H1 (cell line): ENCODE measurements at regions of chr5 and their contacts with region 1.

Region 1: DNA sequence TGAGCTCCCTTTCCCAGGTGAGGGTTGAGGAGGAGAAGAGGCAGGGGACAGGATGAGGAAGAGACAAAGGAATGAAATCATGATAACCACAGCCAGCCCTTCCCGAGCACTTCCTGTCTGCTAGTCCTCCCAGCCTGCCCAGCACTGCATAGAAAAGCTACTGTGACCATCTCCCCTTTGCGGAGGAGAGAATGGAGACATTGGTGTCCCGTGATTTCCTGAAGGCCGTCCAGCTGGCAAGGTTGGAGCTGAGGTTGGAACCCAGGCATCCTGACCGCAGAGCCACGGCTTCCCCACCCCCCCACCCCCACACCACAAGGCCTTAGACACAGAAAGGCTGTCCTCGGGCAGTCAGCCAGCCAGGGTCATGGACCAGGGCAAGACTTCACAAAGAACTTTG is 131.1 kb upstream of the ICE1 start:
- DNase-seq: no peak
- H3K4me3 ChIP-seq: no peak overlapping the region
- H3K27ac ChIP-seq: no peak overlapping the region
- H3K4me1 ChIP-seq: peaks cover 0 to 2% (median 0%) of the 10 kb centered on the region in 4 experiments; a peak in 1 of 7 replicates
- H3K27me3 ChIP-seq: no peaks in the 10 kb centered on the region
- CTCF ChIP-seq: no peak
- EP300 ChIP-seq: no peak
- POLR2A ChIP-seq: no peak
- RAD21 ChIP-seq: no peak

Region 2: GRCh38 chr5:5209089-5209488 is 82.3 kb before region 1 on chr5:
- CTCF ChIA-PET with region 1: no interaction called
- POLR2A ChIA-PET with region 1: no interaction called
- DNase-seq: no peak
- H3K4me3 ChIP-seq: no peak overlapping the region
- H3K27ac ChIP-seq: no peak overlapping the region
- H3K4me1 ChIP-seq: no peaks in the 10 kb centered on the region
- H3K27me3 ChIP-seq: no peaks in the 10 kb centered on the region
- CTCF ChIP-seq: no peak
- EP300 ChIP-seq: no peak
- POLR2A ChIP-seq: no peak
- RAD21 ChIP-seq: no peak

Region 3: GRCh38 chr5:5266296-5266695 is 25.1 kb before region 1 on chr5:
- CTCF ChIA-PET with region 1: interaction called, 10 read pairs
- POLR2A ChIA-PET with region 1: no interaction called
- DNase-seq: no peak
- H3K4me3 ChIP-seq: no peak overlapping the region
- H3K27ac ChIP-seq: no peak overlapping the region
- H3K4me1 ChIP-seq: peaks cover 0 to 5% (median 2%) of the 10 kb centered on the region in 4 experiments; a peak in 4 of 7 replicates
- H3K27me3 ChIP-seq: no peaks in the 10 kb centered on the region; a peak in 1 of 7 replicates
- CTCF ChIP-seq: no peak
- EP300 ChIP-seq: no peak
- POLR2A ChIP-seq: no peak
- RAD21 ChIP-seq: no peak

Region 4: GRCh38 chr5:5306696-5307095 is 15.3 kb after region 1 on chr5:
- CTCF ChIA-PET with region 1: interaction called, 17 read pairs
- POLR2A ChIA-PET with region 1: interaction called, 3 read pairs
- DNase-seq: no peak
- H3K4me3 ChIP-seq: no peak overlapping the region
- H3K27ac ChIP-seq: no peak overlapping the region
- H3K4me1 ChIP-seq: peaks cover 0 to 2% (median 0%) of the 10 kb centered on the region in 4 experiments; a peak in 3 of 7 replicates
- H3K27me3 ChIP-seq: no peaks in the 10 kb centered on the region
- CTCF ChIP-seq: no peak
- EP300 ChIP-seq: no peak
- POLR2A ChIP-seq: no peak
- RAD21 ChIP-seq: no peak

Region 5: GRCh38 chr5:5313101-5313635 is 21.8 kb after region 1 on chr5:
- CTCF ChIA-PET with region 1: interaction called, 17 read pairs
- POLR2A ChIA-PET with region 1: no interaction called
- DNase-seq: no peak
- H3K4me3 ChIP-seq: no peak overlapping the region
- H3K27ac ChIP-seq: no peak overlapping the region
- H3K4me1 ChIP-seq: peaks cover 0 to 14% (median 5%) of the 10 kb centered on the region in 4 experiments; a peak in 5 of 7 replicates
- H3K27me3 ChIP-seq: no peaks in the 10 kb centered on the region
- CTCF ChIP-seq: no peak
- EP300 ChIP-seq: no peak
- POLR2A ChIP-seq: no peak
- RAD21 ChIP-seq: no peak

Region 6: DNA sequence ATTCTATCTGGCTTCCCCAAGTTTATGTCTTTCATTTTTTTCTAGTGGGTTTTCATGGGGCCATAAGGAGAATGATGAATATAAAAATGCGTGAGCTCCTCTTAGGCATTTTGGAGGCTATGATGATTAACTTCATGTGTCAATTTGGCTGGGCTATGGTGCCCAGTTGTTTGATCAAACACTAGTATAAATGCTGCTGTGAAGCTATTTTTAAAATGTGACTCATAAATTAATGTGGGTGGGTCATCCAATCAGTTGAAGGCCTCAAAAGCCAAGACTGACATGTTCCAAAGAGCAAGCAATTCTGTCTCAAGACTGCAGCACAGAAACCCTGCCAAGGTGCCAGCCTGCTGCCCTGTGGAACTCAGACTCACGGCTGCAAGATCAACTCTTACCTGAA is 106.7 kb after region 1 on chr5:
- CTCF ChIA-PET with region 1: interaction called, 22 read pairs
- POLR2A ChIA-PET with region 1: no interaction called
- DNase-seq: no peak
- H3K4me3 ChIP-seq: no peak overlapping the region
- H3K27ac ChIP-seq: no peak overlapping the region
- H3K4me1 ChIP-seq: no peaks in the 10 kb centered on the region
- H3K27me3 ChIP-seq: no peaks in the 10 kb centered on the region
- CTCF ChIP-seq: no peak
- EP300 ChIP-seq: no peak
- POLR2A ChIP-seq: no peak
- RAD21 ChIP-seq: no peak